ENCODE measurements at regions of chrX and their contacts with region 1.

Region 1: GRCh38 chrX:14173873-14174272 is 144.2 kb upstream of the GEMIN8 start:
- DNase-seq: no peak
- H3K4me3 ChIP-seq: no peak overlapping the region
- H3K27ac ChIP-seq: no peak overlapping the region
- H3K4me1 ChIP-seq: no peaks in the 10 kb centered on the region
- H3K27me3 ChIP-seq: no peaks in the 10 kb centered on the region
- CTCF ChIP-seq: no peak
- POLR2A ChIP-seq: no peak

Region 2: GRCh38 chrX:13398073-13398823 is 775.6 kb before region 1 on chrX:
- CTCF ChIA-PET with region 1: no interaction called
- POLR2A ChIA-PET with region 1: no interaction called
- dilution Hi-C with region 1: no loop called
- intact Hi-C with region 1: no loop called
- DNase-seq: peak; percentile 95
- H3K4me3 ChIP-seq: no peak overlapping the region
- H3K27ac ChIP-seq: peak overlapping the region; percentile 93
- H3K4me1 ChIP-seq: peaks cover 31% of the 10 kb centered on the region
- H3K27me3 ChIP-seq: no peaks in the 10 kb centered on the region
- CTCF ChIP-seq: no peak
- POLR2A ChIP-seq: peak; percentile 37

Region 3: DNA sequence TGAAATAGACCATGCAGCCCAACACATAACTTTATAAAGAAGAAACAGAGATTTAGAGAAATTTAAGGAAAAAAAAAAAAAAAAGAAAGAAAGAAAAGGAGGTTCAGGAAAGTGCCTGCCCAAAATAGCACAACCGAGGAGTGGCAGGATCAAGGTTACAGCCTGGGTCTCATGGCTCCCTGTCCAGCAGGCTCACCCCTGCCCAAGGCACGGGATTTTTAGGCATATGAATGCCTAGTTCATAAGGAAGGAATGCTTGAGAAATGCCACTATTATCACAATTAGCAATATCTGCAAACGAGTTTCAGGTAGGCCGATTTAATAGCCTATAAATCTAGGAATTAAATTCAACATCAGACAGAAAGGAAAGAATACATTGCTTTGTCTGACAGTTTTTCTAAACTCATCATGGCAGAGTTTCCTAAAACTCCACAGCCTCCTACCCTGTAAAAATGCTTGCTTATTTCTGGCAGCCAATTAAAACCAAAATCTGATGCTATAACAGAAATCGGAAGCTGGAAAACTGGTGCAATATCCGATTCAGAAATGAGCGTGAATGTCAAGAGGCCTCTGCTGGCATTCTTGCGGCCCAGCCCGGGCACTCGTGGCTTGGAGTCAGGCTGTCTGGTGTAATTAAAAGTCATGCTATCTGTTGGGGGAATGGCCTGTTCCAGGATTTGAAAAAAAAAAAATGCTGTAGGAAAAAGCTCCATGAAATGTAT is 207.6 kb before region 1 on chrX:
- CTCF ChIA-PET with region 1: no interaction called
- POLR2A ChIA-PET with region 1: no interaction called
- dilution Hi-C with region 1: no loop called
- intact Hi-C with region 1: loop called (anchors 10 kb)
- DNase-seq: no peak
- H3K4me3 ChIP-seq: no peak overlapping the region
- H3K27ac ChIP-seq: no peak overlapping the region
- H3K4me1 ChIP-seq: no peaks in the 10 kb centered on the region
- H3K27me3 ChIP-seq: no peaks in the 10 kb centered on the region
- CTCF ChIP-seq: no peak
- POLR2A ChIP-seq: no peak